Posterior cingulate gyrus (tissue), 11 donors: ENCODE measurements at regions of chr12 and their contacts with region 1.

Region 1: DNA sequence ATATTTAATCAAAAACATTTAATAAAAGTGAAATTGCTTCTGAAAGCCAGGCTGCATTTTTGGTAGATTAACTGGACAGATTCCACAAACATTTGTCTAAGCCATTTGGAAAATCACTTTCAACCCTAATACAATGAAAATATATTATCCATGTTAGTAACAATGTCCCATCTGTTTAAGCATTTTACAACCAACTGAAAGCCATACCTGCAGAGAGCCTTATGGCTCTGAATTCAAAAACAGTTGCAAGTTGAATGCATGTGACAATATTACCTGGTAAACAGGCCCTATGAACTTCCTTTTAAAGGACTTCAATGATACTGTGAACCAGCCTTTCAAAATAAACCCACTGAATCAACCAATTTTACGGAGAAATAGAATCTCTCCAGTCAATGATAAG is 468.1 kb downstream of the BTG1 start:
- DNase-seq: no peak

Region 2: GRCh38 chr12:92349635-92350034 is 672.1 kb after region 1 on chr12:
- intact Hi-C with region 1: loop called (anchors 5 kb)
- DNase-seq: no peak